CD4-positive, alpha-beta T cell (primary cell): ENCODE measurements at regions of chr7 and their contacts with region 1.

Region 1: DNA sequence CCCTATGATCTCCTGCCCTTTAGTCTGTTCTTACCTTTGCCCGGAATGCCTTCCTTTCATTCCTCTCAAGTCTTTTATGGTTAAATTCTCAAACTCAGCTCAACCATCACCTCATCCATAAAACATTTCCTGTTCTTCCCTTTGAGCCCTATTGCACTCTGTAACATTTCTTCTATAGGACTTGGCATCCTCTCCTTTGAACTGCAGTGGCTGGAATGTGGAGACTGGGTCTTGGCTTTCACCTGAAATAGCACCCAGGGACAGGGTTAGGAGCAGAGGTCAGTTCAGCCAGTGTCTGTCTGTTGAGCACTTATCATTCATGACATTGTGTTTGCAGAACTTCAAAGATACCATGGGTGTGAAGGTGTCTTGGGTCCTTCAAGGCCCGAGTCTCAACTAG is 7.2 kb downstream of the NFE2L3 start:
- DNase-seq: no peak
- ATAC-seq: no peak
- H3K4me3 ChIP-seq: no peak overlapping the region
- H3K4me3 Mint-ChIP-seq: no peak overlapping the region
- H3K27ac ChIP-seq: peak overlapping the region in 1 of 2 donors; percentile 14
- H3K27ac Mint-ChIP-seq: peak overlapping the region; percentile 1
- H3K4me1 ChIP-seq: peaks cover 47% of the 10 kb centered on the region
- H3K4me1 Mint-ChIP-seq: peaks cover 50% of the 10 kb centered on the region
- H3K27me3 ChIP-seq: no peaks in the 10 kb centered on the region
- H3K27me3 Mint-ChIP-seq: no peaks in the 10 kb centered on the region
- CTCF ChIP-seq: no peak

Region 2: GRCh38 chr7:26193432-26194207 is 34.4 kb after region 1 on chr7:
- CTCF ChIA-PET with region 1: interaction called, 7 read pairs
- POLR2A ChIA-PET with region 1: interaction called, 19 read pairs
- intact Hi-C with region 1: loop called in 1 of 2 experiments (anchors 1 kb)
- DNase-seq: peak in 1 of 14 experiments; percentile 34
- ATAC-seq: no peak
- H3K4me3 ChIP-seq: no peak overlapping the region
- H3K4me3 Mint-ChIP-seq: peak overlapping the region; percentile 87
- H3K27ac ChIP-seq: peak overlapping the region; percentile 5 to 33
- H3K27ac Mint-ChIP-seq: peak overlapping the region; percentile 83
- H3K4me1 ChIP-seq: peaks cover 39% of the 10 kb centered on the region
- H3K4me1 Mint-ChIP-seq: peaks cover 94% of the 10 kb centered on the region
- H3K27me3 ChIP-seq: no peaks in the 10 kb centered on the region
- H3K27me3 Mint-ChIP-seq: no peaks in the 10 kb centered on the region
- CTCF ChIP-seq: no peak

Region 3: GRCh38 chr7:26224359-26224758 is 65.1 kb after region 1 on chr7:
- CTCF ChIA-PET with region 1: no interaction called
- POLR2A ChIA-PET with region 1: no interaction called
- intact Hi-C with region 1: no loop called
- DNase-seq: no peak
- ATAC-seq: no peak
- H3K4me3 ChIP-seq: no peak overlapping the region
- H3K4me3 Mint-ChIP-seq: no peak overlapping the region
- H3K27ac ChIP-seq: no peak overlapping the region
- H3K27ac Mint-ChIP-seq: no peak overlapping the region
- H3K4me1 ChIP-seq: no peaks in the 10 kb centered on the region
- H3K4me1 Mint-ChIP-seq: no peaks in the 10 kb centered on the region
- H3K27me3 ChIP-seq: no peaks in the 10 kb centered on the region
- H3K27me3 Mint-ChIP-seq: peaks cover 3% of the 10 kb centered on the region
- CTCF ChIP-seq: no peak

Region 4: GRCh38 chr7:27434756-27435400 is 1275.6 kb after region 1 on chr7:
- CTCF ChIA-PET with region 1: no interaction called
- POLR2A ChIA-PET with region 1: no interaction called
- intact Hi-C with region 1: no loop called
- DNase-seq: no peak
- ATAC-seq: no peak
- H3K4me3 ChIP-seq: no peak overlapping the region
- H3K4me3 Mint-ChIP-seq: no peak overlapping the region
- H3K27ac ChIP-seq: no peak overlapping the region
- H3K27ac Mint-ChIP-seq: no peak overlapping the region
- H3K4me1 ChIP-seq: no peaks in the 10 kb centered on the region
- H3K4me1 Mint-ChIP-seq: no peaks in the 10 kb centered on the region
- H3K27me3 ChIP-seq: peaks cover 5 to 8% of the 10 kb centered on the region in 2 experiments
- H3K27me3 Mint-ChIP-seq: peaks cover 36% of the 10 kb centered on the region
- CTCF ChIP-seq: no peak